ENCODE measurements at regions of chrX and their contacts with region 1.

Region 1: GRCh38 chrX:57453901-57454300 is 137.9 kb upstream of the ZXDB start:
- DNase-seq: peak; percentile 48
- H3K4me3 ChIP-seq: no peak overlapping the region
- H3K27ac ChIP-seq: no peak overlapping the region
- H3K4me1 ChIP-seq: no peaks in the 10 kb centered on the region
- H3K27me3 ChIP-seq: no peaks in the 10 kb centered on the region

Region 2: DNA sequence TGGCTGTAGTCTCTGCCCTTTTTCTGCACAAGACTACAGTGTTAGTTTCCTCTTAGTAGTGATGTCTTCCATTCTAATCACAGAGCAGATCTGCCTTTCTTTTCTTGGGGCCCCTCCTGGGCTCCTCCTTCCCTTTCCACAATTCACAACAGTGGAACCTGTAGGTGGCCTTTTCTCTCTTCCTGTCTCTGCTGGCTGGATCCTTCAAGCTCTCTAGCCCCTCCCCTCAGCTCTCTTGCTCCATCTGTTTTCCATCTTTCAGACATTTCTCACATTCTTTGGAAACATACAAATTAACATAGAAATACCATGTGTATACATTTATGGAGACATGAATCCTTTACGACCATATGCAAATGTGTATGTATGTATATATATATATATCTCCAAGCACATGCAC is 316.4 kb before region 1 on chrX:
- in situ Hi-C with region 1: loop called (anchors 10 kb)
- DNase-seq: peak; percentile 1
- H3K4me3 ChIP-seq: no peak overlapping the region
- H3K27ac ChIP-seq: no peak overlapping the region
- H3K4me1 ChIP-seq: no peaks in the 10 kb centered on the region
- H3K27me3 ChIP-seq: no peaks in the 10 kb centered on the region

Region 3: GRCh38 chrX:57587607-57588006 is 133.7 kb after region 1 on chrX:
- in situ Hi-C with region 1: no loop called
- DNase-seq: no peak
- H3K4me3 ChIP-seq: no peak overlapping the region
- H3K27ac ChIP-seq: no peak overlapping the region
- H3K4me1 ChIP-seq: peaks cover 7% of the 10 kb centered on the region
- H3K27me3 ChIP-seq: no peaks in the 10 kb centered on the region

Measured in GM23248 (cell line).